Activated T-helper 2 cell treated with anti-CD3 and anti-CD28 coated beads, Interferon-gamma antibody, Interleukin-2, Interleukin-4, amounts not matched to agents 10 μg/mL and 5 μg/mL and 100 μg/mL, durations not matched to agents 14 hours and 24 hours and 36 hours (primary cell): ENCODE measurements at regions of chr12 and their contacts with region 1.

Region 1: DNA sequence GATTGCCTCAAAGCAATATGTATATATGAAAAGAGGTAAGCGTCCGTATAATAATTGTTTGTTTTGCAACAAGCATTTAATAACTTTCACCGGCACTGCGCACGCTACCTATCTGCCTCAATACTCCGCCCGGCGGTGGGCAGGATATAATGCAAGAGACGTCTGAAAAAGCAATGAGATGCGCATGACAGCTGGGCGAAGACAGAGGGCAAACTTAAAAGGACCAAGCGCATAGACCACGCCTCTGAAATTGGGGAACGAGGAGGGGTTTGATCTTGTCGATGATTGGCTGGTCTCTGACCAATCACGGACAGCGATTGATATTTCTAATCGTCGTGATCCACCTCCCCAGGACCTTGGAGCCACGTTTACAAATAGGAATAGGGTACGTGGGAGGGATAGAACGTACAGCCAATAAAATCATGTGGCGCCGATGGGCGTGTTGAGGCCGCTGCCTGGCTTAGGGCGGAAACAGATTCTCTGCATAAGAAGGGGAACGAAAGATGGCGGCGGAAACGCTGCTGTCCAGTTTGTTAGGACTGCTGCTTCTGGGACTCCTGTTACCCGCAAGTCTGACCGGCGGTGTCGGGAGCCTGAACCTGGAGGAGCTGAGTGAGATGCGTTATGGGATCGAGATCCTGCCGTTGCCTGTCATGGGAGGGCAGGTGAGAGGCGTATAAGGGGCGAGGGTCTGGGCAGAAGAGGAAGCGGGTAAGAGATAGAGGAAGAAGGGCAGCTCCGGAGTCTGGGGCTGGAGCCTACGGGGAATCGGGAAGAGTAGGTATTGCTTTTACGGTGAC is at the start of gene OS9:
- DNase-seq: peak; percentile 96
- H3K4me3 Mint-ChIP-seq: no peak within 1 kb of the TSS
- H3K27ac Mint-ChIP-seq: no peak within 1 kb of the TSS
- H3K4me1 Mint-ChIP-seq: no peaks in the 10 kb centered on the region
- H3K27me3 Mint-ChIP-seq: peaks cover 13% of the 10 kb centered on the region
- total RNA-seq, gene OS9: 97.4 and 99.1 TPM in 2 replicates

Region 2: DNA sequence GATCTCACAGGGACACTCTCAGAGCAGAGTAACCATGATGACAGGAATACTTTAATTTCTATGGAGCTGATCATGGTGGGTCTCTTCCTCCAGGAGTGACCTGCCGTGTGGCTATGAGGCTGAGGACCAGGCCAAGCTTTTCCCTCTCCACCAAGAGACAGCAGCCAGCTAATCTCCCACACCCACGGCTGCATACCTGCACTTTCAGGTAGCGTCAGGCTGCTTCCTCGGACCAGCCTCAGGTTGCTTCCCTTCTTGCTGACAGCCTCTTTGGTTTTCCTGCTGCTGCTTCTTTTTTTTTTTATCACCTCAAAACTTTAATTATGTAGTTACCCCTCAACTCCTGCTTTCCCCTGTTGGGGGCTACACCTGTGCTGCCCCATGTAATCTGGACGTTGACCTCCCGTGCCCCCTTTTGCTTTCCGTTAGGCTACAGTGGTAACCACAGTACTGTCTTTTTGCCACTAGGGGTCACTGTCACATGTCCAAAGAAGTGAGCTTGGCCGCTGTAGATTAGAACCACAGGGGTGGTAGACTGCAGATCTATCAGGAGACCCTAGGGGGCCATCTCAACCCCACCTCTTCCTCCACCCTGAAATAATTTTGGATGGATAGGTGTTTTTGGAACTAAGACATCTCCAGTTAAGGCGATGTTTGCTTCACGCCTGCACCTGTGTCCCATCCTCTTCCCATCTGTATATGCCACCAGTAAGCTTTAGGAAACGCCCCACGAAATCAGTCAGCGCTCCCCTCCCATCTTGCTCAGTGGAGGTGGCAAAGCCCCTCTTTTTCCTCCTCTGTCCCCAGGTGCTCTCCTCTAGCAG is 110.6 kb before region 1 on chr12:
- intact Hi-C with region 1: loop called (anchors 2 kb)
- DNase-seq: peak; percentile 60
- H3K4me3 Mint-ChIP-seq: no peak overlapping the region
- H3K27ac Mint-ChIP-seq: no peak overlapping the region
- H3K4me1 Mint-ChIP-seq: peaks cover 2% of the 10 kb centered on the region
- H3K27me3 Mint-ChIP-seq: peaks cover 2% of the 10 kb centered on the region

Region 3: GRCh38 chr12:57632694-57633477 is 61.0 kb before region 1 on chr12 and contains the start of gene B4GALNT1:
- intact Hi-C with region 1: loop called (anchors 2 kb)
- DNase-seq: peak; percentile 58
- H3K4me3 Mint-ChIP-seq: peak within 1 kb of the TSS; percentile 74
- H3K27ac Mint-ChIP-seq: no peak within 1 kb of the TSS
- H3K4me1 Mint-ChIP-seq: peaks cover 4% of the 10 kb centered on the region
- H3K27me3 Mint-ChIP-seq: peaks cover 62% of the 10 kb centered on the region
- total RNA-seq, gene B4GALNT1: 10.8 and 11.3 TPM in 2 replicates